ENCODE measurements at regions of chr6 and their contacts with region 1.

Region 1: GRCh38 chr6:7589949-7590917 is at the start of gene SNRNP48:
- DNase-seq: peak; percentile 96
- H3K4me3 ChIP-seq: peak within 1 kb of the TSS; percentile 68 to 95 (median 92)
- H3K27ac ChIP-seq: peak within 1 kb of the TSS; percentile 75 to 87 (median 87)
- H3K4me1 ChIP-seq: peaks cover 3 to 58% (median 31%) of the 10 kb centered on the region in 4 donors
- H3K27me3 ChIP-seq: no peaks in the 10 kb centered on the region
- CTCF ChIP-seq: no peak
- EP300 ChIP-seq: no peak
- POLR2A ChIP-seq: peak; percentile 87
- total RNA-seq, gene SNRNP48: 7.9 to 31.8 (median 16.6) TPM

Region 2: DNA sequence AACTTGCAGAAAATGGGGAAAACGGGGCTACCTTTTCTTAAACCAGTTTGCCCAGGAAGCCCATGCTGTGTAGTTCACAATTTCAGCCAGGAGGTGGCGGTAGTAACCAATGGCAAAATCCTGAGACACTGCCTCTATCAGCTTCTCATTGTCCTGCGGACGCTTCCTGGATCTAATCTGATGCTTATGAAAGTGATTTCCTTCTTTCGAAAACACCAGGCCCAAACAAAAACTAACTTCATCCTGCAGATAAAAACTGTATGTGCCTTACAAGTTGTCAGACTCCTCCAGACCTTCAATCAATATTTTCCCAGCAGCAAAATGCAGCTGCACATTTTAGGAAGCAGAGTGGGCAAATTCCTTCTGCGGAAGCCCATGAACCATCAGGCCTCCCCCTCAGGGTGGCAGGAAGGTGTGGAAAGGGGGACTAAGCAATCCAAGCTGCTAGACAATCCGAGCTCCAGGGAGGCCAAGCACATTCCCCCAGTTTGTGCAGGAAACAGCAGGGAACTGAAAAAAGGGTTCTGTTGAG is 913.3 kb before region 1 on chr6:
- in situ Hi-C with region 1: loop called in 1 of 4 experiments (anchors 25 kb)
- intact Hi-C with region 1: no loop called
- DNase-seq: peak; percentile 90
- H3K4me3 ChIP-seq: no peak overlapping the region
- H3K27ac ChIP-seq: peak overlapping the region; percentile 66 to 86 (median 72)
- H3K4me1 ChIP-seq: peaks cover 7 to 47% (median 17%) of the 10 kb centered on the region in 4 donors
- H3K27me3 ChIP-seq: no peaks in the 10 kb centered on the region
- CTCF ChIP-seq: peak; percentile 97 to 99 (median 98)
- EP300 ChIP-seq: no peak
- POLR2A ChIP-seq: no peak

Region 3: GRCh38 chr6:7300926-7301325 is 289.3 kb before region 1 on chr6:
- in situ Hi-C with region 1: loop called in 1 of 4 experiments (anchors 10 kb)
- intact Hi-C with region 1: no loop called
- DNase-seq: no peak
- H3K4me3 ChIP-seq: no peak overlapping the region
- H3K27ac ChIP-seq: no peak overlapping the region
- H3K4me1 ChIP-seq: no peaks in the 10 kb centered on the region
- H3K27me3 ChIP-seq: no peaks in the 10 kb centered on the region
- CTCF ChIP-seq: no peak
- EP300 ChIP-seq: no peak
- POLR2A ChIP-seq: no peak

Region 4: GRCh38 chr6:7424967-7425807 is 165.0 kb before region 1 on chr6:
- in situ Hi-C with region 1: loop called in 2 of 4 experiments (anchors 25 kb)
- intact Hi-C with region 1: no loop called
- DNase-seq: no peak
- H3K4me3 ChIP-seq: no peak overlapping the region
- H3K27ac ChIP-seq: no peak overlapping the region
- H3K4me1 ChIP-seq: no peaks in the 10 kb centered on the region
- H3K27me3 ChIP-seq: no peaks in the 10 kb centered on the region
- CTCF ChIP-seq: peak; percentile 32 to 73 (median 54)
- EP300 ChIP-seq: no peak
- POLR2A ChIP-seq: no peak

Region 5: DNA sequence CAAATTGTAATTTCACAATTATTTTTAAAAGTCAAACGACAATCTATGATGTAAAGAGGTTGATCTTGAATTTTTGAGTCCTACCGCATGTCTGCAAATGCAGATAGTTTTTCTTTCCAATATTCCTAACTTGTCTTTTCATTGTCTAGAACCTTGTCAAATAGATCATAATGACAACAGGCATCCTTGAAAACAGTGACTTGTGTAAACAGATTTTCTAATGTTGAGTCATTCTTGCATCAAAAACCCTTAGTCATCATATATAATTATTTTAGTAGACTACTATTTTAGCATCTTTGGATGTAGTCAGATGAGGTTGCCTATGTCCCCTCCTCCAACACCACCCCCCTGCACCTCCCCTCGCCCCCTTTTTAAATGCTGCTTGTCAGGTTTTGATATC is 179.5 kb after region 1 on chr6:
- in situ Hi-C with region 1: no loop called
- intact Hi-C with region 1: no loop called
- DNase-seq: no peak
- H3K4me3 ChIP-seq: no peak overlapping the region
- H3K27ac ChIP-seq: no peak overlapping the region
- H3K4me1 ChIP-seq: no peaks in the 10 kb centered on the region
- H3K27me3 ChIP-seq: no peaks in the 10 kb centered on the region
- CTCF ChIP-seq: no peak
- EP300 ChIP-seq: no peak
- POLR2A ChIP-seq: no peak

Measured in transverse colon (tissue), 4 donors.